ENCODE measurements at regions of chr16 and their contacts with region 1.

Region 1: GRCh38 chr16:18816286-18816685 is 14.9 kb upstream of the ARL6IP1 start:
- DNase-seq: no peak
- ATAC-seq: no peak
- H3K4me3 ChIP-seq: no peak overlapping the region
- H3K4me3 Mint-ChIP-seq: no peak overlapping the region
- H3K27ac ChIP-seq: no peak overlapping the region
- H3K27ac Mint-ChIP-seq: peak overlapping the region in 1 of 2 donors; percentile 22
- H3K4me1 ChIP-seq: peaks cover 0 to 9% of the 10 kb centered on the region in 2 experiments
- H3K4me1 Mint-ChIP-seq: peaks cover 14 to 15% (median 15%) of the 10 kb centered on the region in 3 donors
- H3K27me3 ChIP-seq: no peaks in the 10 kb centered on the region
- H3K27me3 Mint-ChIP-seq: no peaks in the 10 kb centered on the region

Region 2: DNA sequence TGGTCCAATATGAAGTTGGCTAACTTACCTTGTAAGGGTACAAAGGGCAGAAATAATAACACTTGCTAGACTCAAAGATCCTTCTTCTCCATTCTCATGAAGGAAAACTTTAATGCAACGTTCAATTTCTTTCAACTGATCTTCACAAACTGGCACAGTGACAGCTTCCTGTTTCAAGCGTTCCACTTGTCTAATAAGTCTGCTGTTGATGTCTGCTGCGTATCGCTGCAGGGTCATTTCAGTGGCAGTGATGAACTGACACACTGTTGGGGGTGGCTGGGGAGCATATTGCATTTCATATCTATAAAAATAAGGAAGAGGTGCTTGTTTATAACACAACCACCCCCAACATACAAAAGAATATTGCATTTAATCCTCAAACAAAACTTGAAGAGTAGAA is 18.6 kb after region 1 on chr16:
- CTCF ChIA-PET with region 1: no interaction called
- POLR2A ChIA-PET with region 1: interaction called in 1 of 2 experiments, 17 read pairs
- DNase-seq: no peak
- ATAC-seq: no peak
- H3K4me3 ChIP-seq: no peak overlapping the region
- H3K4me3 Mint-ChIP-seq: no peak overlapping the region
- H3K27ac ChIP-seq: no peak overlapping the region
- H3K27ac Mint-ChIP-seq: peak overlapping the region in 1 of 2 donors; percentile 25
- H3K4me1 ChIP-seq: no peaks in the 10 kb centered on the region
- H3K4me1 Mint-ChIP-seq: no peaks in the 10 kb centered on the region
- H3K27me3 ChIP-seq: no peaks in the 10 kb centered on the region
- H3K27me3 Mint-ChIP-seq: no peaks in the 10 kb centered on the region